AG04449 (cell line): ENCODE measurements at regions of chr9 and their contacts with region 1.

Region 1: DNA sequence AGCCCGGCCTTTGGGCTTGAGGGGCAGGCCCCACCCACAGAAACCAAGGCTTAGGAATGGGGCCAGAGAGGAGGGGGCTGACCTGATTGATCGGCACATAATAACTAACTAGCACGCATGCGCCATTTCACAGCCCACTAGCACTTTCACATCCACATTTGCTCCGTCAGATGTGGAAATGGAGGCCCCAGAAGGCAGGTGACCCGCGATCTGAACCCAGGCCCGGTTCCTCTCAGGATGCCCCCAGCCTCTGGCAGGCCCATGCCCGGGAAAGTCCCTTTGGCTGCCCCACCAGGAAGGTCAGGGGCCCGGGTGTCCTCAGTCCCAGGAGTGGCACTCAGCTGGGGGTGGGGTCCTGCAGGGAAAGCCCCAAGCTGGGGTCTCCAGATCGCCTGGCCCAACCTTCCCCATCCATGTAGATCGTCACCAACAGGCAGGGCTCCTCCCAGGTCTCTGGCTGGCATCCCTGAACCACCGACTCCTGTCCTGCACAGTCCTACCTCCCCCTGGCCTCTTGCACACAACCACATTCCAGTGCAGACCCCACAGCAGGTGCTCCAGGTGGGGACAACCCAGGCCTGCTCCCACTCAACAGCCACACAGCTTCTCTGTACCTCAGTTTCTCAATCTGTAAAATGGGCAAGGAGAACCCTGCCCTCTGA is 46.7 kb downstream of the VAV2 start:
- DNase-seq: no peak
- H3K4me3 ChIP-seq: no peak overlapping the region
- CTCF ChIP-seq: no peak

Region 2: DNA sequence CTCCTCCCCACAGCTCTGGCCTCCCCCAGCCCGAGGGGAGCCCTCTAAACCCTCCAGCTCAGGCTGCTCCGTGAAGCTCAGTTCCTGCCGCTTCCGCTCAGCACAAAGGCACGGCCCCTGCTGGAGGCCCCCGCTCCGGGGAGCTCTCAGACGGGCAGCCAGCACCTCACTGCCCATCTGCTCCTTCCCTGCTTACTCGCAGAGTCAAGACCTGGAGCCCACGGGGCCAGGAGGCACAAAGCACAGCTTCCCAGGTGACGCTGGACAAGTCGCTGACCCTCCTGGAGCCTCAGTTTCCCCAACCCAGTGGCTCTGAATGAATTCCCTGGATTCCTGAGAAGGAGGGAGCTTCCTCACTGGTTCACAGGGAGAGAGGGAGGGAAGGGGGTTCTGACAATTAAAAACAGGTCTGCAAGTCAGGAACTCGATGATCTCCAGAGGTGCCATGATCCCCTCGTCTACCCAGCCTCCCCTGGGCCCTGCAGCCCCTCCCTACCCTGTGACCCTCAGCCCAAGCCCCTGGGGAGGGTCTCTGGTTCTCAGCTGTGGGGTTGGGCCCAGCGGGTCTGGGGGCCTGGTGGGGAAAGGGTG is 10.5 kb after region 1 on chr9:
- CTCF ChIA-PET with region 1: interaction called, 11 read pairs
- POLR2A ChIA-PET with region 1: interaction called, 3 read pairs
- DNase-seq: no peak
- H3K4me3 ChIP-seq: peak overlapping the region; percentile 29
- CTCF ChIP-seq: peak; percentile 28

Region 3: GRCh38 chr9:134040781-134041648 is 95.6 kb after region 1 on chr9:
- CTCF ChIA-PET with region 1: no interaction called
- POLR2A ChIA-PET with region 1: no interaction called
- DNase-seq: no peak
- H3K4me3 ChIP-seq: no peak overlapping the region
- CTCF ChIP-seq: no peak